ENCODE measurements at regions of chr2 and their contacts with region 1.

Region 1: GRCh38 chr2:174039551-174040416 is 74.6 kb upstream of the SP3 start:
- DNase-seq: peak; percentile 86 to 93 (median 89)
- ATAC-seq: peak; percentile 75 to 90 (median 86)
- H3K4me3 ChIP-seq: peak overlapping the region in 7 of 12 donors; percentile 6 to 20 (median 16)
- H3K27ac ChIP-seq: peak overlapping the region; percentile 57 to 97 (median 85)
- H3K4me1 ChIP-seq: peaks cover 0 to 48% (median 23%) of the 10 kb centered on the region in 12 donors
- H3K27me3 ChIP-seq: no peaks in the 10 kb centered on the region
- CTCF ChIP-seq: peak; percentile 81 to 94 (median 88)
- POLR2A ChIP-seq: no peak

Region 2: DNA sequence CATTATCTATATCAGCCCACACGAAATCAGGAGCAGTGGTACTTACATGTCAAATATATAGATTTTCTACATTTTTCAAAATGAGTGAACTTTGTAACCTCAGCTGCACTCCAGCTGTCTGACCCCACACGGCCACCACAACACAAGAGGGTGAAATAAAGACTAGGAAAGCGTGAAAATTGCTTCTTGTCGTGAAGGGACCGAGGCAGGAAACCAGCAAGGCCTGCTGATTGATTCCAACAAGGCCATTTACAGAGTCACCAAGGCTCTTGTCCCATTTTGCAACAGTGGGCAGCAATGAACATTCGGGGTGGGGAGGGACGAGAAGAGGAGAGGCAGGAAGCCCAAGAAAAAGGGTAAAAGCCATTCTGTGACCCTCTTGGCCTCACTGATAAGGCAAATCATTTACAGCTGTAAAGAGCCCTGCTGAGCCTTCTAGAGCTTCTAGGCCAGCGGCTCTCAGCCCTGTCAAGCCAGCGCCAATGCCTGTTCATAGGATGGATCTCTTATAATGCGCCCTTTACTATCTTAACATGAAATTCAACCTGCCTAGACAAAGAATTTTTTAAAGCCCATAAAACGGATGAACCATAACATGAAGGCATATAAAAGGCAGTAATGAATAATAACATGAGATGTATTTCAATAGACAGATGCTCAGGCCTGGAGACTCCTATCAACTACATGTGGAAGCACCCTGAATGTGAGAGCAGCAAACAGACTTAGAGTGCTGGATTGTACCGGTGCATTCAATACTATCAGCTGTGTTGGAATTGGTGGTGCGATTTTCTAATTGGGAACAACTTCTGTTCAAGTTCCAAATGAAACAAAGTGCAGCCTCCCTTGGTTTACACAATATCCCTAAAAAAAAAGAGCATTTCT is 416.1 kb before region 1 on chr2:
- intact Hi-C with region 1: no loop called
- DNase-seq: no peak
- ATAC-seq: no peak
- H3K4me3 ChIP-seq: no peak overlapping the region
- H3K27ac ChIP-seq: no peak overlapping the region
- H3K4me1 ChIP-seq: no peaks in the 10 kb centered on the region
- H3K27me3 ChIP-seq: no peaks in the 10 kb centered on the region
- CTCF ChIP-seq: no peak
- POLR2A ChIP-seq: no peak

Region 3: GRCh38 chr2:173749315-173749714 is 290.5 kb before region 1 on chr2:
- intact Hi-C with region 1: loop called in 5 of 10 experiments (anchors 5 to 10 kb)
- DNase-seq: no peak
- ATAC-seq: no peak
- H3K4me3 ChIP-seq: no peak overlapping the region
- H3K27ac ChIP-seq: no peak overlapping the region
- H3K4me1 ChIP-seq: peaks cover 0 to 10% (median 1%) of the 10 kb centered on the region in 12 donors
- H3K27me3 ChIP-seq: peaks cover 0 to 7% (median 0%) of the 10 kb centered on the region in 9 donors
- CTCF ChIP-seq: peak in 5 of 12 donors; percentile 20 to 29 (median 24)
- POLR2A ChIP-seq: no peak

Region 4: DNA sequence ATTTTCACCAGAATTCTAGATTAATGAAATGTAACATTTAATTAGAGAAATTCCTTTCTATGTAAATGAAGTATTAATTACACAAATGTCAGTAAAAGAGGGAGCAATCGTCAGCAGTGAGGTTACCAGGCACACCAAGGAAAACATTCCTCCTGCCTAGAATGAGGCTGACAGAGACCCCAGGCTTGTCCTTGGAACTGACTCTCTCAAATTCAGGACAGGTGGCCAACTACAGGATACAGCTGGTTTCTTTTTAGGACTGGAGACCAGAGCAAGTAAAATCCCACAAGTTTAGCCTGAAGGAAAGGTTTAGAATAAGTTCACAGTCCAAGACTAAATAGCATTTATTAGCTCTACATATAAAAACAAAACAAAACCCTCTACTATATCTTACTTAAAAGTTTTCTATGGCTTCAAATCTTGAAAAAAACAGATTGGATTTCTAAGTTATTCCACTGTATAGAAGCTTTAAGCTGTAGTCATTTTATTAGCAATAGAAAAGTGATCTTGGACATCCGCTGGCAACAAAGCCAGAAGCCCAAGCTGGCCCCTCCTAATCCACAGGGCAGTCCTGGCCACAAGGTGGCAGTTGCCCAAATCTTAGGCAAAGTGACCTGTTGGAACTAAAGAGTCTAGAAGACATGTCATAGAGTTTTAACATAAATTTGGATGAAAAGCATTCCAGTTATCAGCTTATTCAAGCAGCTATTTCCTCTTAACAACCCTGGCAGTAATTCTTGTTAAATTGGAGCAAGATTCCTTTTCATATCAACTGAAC is 155.6 kb before region 1 on chr2:
- intact Hi-C with region 1: loop called in 9 of 10 experiments (anchors 2 to 10 kb)
- DNase-seq: peak; percentile 43 to 69 (median 62)
- ATAC-seq: peak in 3 of 4 donors; percentile 52 to 71 (median 69)
- H3K4me3 ChIP-seq: no peak overlapping the region
- H3K27ac ChIP-seq: no peak overlapping the region
- H3K4me1 ChIP-seq: peaks cover 0 to 11% (median 0%) of the 10 kb centered on the region in 12 donors
- H3K27me3 ChIP-seq: no peaks in the 10 kb centered on the region
- CTCF ChIP-seq: peak; percentile 53 to 79 (median 67)
- POLR2A ChIP-seq: no peak

Region 5: DNA sequence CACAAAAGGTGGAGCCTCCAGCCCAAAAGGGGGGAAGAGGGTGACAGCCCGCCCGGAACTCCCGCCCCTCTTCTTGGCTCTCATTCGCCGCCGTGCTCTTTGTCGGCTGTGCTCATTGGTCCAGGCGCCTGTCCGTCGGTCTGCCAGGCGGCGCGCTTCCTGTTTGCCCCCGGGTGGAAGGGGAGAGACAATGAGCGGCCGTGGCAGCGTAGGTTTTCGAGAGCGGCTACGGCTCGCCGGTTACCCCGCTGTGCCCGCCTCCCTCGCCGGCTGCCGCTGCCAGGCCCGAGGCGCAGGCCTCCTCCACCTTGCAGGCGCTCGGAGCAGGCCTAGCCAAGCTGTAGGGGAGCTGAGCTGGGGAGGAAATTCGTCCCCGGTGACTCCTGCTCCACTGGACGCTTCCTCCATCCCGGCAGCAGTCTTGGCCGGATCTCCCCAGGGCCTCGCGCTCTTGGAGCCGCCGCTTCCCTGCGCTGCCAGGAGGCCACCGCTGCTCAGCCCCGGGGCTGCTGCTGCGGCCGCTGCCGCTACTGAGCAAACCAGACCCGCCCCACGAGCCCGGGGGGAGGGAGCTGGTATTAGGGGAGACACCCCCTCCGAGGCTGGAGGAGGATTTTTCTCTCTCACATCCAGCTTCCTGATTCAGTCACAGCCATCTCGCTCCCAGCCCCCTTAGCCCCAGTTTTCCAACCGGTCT is 74.3 kb before region 1 on chr2 and contains the start of gene SP3:
- intact Hi-C with region 1: loop called in 9 of 10 experiments (anchors 2 to 5 kb)
- DNase-seq: peak; percentile 99
- ATAC-seq: peak; percentile 90 to 95 (median 92)
- H3K4me3 ChIP-seq: peak within 1 kb of the TSS; percentile 72 to 100 (median 96)
- H3K27ac ChIP-seq: peak within 1 kb of the TSS; percentile 97 to 100 (median 100)
- H3K4me1 ChIP-seq: peaks cover 0 to 40% (median 24%) of the 10 kb centered on the region in 12 donors
- H3K27me3 ChIP-seq: no peaks in the 10 kb centered on the region
- CTCF ChIP-seq: peak in 2 of 12 donors; percentile 7 to 19
- POLR2A ChIP-seq: peak; percentile 15 to 94
- total RNA-seq, gene SP3: 32.2 to 61.5 (median 42.0) TPM

Region 6: DNA sequence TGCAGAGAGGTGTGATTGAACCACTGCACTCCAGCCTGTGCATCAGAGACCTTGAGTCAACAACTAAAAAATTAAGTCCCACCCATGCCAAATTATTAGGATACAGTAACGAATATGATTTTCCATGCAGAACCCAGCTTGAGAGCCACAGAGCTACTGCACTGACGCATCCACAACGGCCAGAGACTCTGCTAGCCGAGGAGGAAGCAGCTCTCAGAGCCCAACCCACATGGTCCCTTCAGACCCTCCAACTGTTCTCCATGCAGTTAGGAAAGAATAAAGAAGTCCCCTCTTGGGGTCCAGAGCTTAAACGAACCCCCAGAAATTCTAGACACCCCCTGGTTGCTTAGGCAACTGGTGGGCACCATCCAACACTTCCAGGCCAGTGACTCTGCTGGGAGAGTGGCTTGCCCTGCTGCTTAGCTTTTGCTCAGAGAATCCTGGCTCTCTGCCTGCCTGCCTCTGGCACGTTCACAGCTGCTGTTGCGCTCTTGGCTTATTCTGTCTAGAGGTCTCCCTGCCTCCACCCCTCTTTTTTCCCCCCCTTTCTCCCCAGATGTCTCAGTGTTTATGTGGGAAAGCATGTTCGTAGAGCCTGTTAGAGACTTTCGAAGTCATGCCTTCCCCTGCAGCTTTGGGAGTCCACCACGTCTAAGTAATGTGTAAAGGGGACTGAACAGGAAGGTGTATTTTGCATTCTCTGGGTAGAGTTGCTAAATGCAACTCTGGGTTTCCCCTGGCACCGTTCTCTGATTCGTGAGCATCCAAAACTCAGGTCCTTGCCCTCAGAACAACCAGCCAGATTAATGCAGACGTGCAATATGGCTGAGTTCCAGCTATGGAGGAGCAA is 48.6 kb before region 1 on chr2:
- intact Hi-C with region 1: loop called in 4 of 10 experiments (anchors 2 to 5 kb)
- DNase-seq: peak; percentile 79 to 90 (median 82)
- ATAC-seq: peak; percentile 64 to 85 (median 78)
- H3K4me3 ChIP-seq: peak overlapping the region in 5 of 12 donors; percentile 2 to 8 (median 4)
- H3K27ac ChIP-seq: peak overlapping the region; percentile 25 to 85 (median 68)
- H3K4me1 ChIP-seq: peaks cover 0 to 74% (median 43%) of the 10 kb centered on the region in 12 donors
- H3K27me3 ChIP-seq: no peaks in the 10 kb centered on the region
- CTCF ChIP-seq: no peak
- POLR2A ChIP-seq: no peak

Region 7: DNA sequence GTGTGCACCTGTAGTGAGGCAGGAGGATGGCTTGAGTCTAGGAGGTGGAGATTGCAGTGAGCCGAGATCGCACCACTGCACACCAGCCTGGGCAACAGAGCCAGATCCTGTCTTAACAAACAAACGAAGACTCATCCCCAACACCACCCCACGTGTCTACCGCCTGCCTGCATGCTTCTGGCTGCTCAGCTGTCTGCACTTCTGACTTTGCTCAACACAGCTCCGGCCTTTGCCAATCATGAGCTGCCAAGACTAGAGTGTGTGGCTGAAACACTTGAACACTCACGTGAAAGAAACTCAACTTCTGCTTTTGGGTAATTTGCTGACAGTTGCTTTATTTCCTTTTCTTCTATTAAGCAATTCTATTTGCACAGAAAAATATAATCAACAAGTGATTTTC is 42.5 kb before region 1 on chr2:
- intact Hi-C with region 1: loop called in 1 of 10 experiments (anchors 5 kb)
- DNase-seq: peak; percentile 77 to 91 (median 87)
- ATAC-seq: peak; percentile 83 to 97 (median 96)
- H3K4me3 ChIP-seq: no peak overlapping the region
- H3K27ac ChIP-seq: peak overlapping the region in 6 of 12 donors; percentile 23 to 88 (median 51)
- H3K4me1 ChIP-seq: peaks cover 4 to 50% (median 33%) of the 10 kb centered on the region in 12 donors
- H3K27me3 ChIP-seq: no peaks in the 10 kb centered on the region
- CTCF ChIP-seq: no peak
- POLR2A ChIP-seq: no peak

Region 8: GRCh38 chr2:174300089-174300488 is 260.3 kb after region 1 on chr2:
- intact Hi-C with region 1: no loop called
- DNase-seq: no peak
- ATAC-seq: no peak
- H3K4me3 ChIP-seq: no peak overlapping the region
- H3K27ac ChIP-seq: no peak overlapping the region
- H3K4me1 ChIP-seq: no peaks in the 10 kb centered on the region
- H3K27me3 ChIP-seq: peaks cover 0 to 15% (median 0%) of the 10 kb centered on the region in 9 donors
- CTCF ChIP-seq: no peak
- POLR2A ChIP-seq: no peak